ENCODE measurements at regions of chr13 and their contacts with region 1.

Region 1: GRCh38 chr13:46831588-46832194 is 34.7 kb upstream of the ESD start:
- DNase-seq: peak; percentile 61
- ATAC-seq: no peak
- H3K4me3 ChIP-seq: no peak overlapping the region
- H3K4me3 Mint-ChIP-seq: no peak overlapping the region
- H3K27ac ChIP-seq: no peak overlapping the region
- H3K27ac Mint-ChIP-seq: no peak overlapping the region
- H3K4me1 ChIP-seq: no peaks in the 10 kb centered on the region
- H3K4me1 Mint-ChIP-seq: no peaks in the 10 kb centered on the region
- H3K27me3 ChIP-seq: no peaks in the 10 kb centered on the region
- H3K27me3 Mint-ChIP-seq: peaks cover 13% of the 10 kb centered on the region
- CTCF ChIP-seq: peak; percentile 93

Region 2: GRCh38 chr13:47598340-47598911 is 766.7 kb after region 1 on chr13:
- CTCF ChIA-PET with region 1: no interaction called
- POLR2A ChIA-PET with region 1: no interaction called
- intact Hi-C with region 1: loop called (anchors 5 kb)
- DNase-seq: no peak
- ATAC-seq: no peak
- H3K4me3 ChIP-seq: no peak overlapping the region
- H3K4me3 Mint-ChIP-seq: no peak overlapping the region
- H3K27ac ChIP-seq: no peak overlapping the region
- H3K27ac Mint-ChIP-seq: no peak overlapping the region
- H3K4me1 ChIP-seq: no peaks in the 10 kb centered on the region
- H3K4me1 Mint-ChIP-seq: no peaks in the 10 kb centered on the region
- H3K27me3 ChIP-seq: no peaks in the 10 kb centered on the region
- H3K27me3 Mint-ChIP-seq: peaks cover 4% of the 10 kb centered on the region
- CTCF ChIP-seq: peak; percentile 11

Measured in B cell (primary cell).